ENCODE measurements at regions of chr2 and their contacts with region 1.

Region 1: DNA sequence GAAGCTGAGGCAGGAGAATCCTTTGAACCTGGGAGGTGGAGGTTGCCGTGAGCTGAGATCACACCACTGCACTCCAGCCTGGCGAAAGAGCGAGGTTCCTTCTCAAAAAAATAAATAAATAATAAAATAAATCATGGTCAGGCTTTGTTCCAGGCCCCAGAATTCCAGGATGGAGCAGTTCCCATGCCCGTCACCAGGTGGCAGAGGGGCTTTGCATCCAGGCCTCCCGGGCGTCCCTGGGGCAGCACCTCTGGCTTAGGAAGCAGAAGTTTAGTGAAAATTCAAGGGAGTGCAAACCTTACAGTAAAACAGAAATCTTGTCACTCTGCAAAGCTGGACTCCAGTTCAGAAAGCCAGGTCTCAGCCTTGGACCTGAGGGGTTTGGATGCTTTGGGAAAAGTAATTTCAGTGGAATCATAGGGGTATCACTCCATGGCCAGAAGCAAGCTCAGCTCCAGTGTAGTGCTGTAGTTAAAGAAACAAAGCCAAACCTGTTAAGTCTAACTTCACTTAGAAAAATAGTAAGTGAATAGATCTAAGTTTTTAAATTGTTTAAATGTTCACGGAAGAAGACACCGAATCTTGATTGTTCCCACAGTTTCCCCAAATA is 512.7 kb downstream of the CMPK2 start:
- DNase-seq: no peak
- H3K4me3 ChIP-seq: no peak overlapping the region
- H3K27ac ChIP-seq: no peak overlapping the region
- H3K4me1 ChIP-seq: no peaks in the 10 kb centered on the region
- H3K27me3 ChIP-seq: no peaks in the 10 kb centered on the region
- CTCF ChIP-seq: peak; percentile 31 to 53

Region 2: GRCh38 chr2:6337472-6337820 is 15.6 kb before region 1 on chr2:
- CTCF ChIA-PET with region 1: no interaction called
- dilution Hi-C with region 1: no loop called
- in situ Hi-C with region 1: no loop called
- intact Hi-C with region 1: no loop called
- DNase-seq: no peak
- H3K4me3 ChIP-seq: no peak overlapping the region
- H3K27ac ChIP-seq: no peak overlapping the region
- H3K4me1 ChIP-seq: no peaks in the 10 kb centered on the region
- H3K27me3 ChIP-seq: no peaks in the 10 kb centered on the region
- CTCF ChIP-seq: no peak

Region 3: GRCh38 chr2:6526093-6526824 is 173.2 kb after region 1 on chr2:
- CTCF ChIA-PET with region 1: no interaction called
- dilution Hi-C with region 1: no loop called
- in situ Hi-C with region 1: no loop called
- intact Hi-C with region 1: loop called (anchors 1 kb)
- DNase-seq: no peak
- H3K4me3 ChIP-seq: no peak overlapping the region
- H3K27ac ChIP-seq: no peak overlapping the region
- H3K4me1 ChIP-seq: no peaks in the 10 kb centered on the region
- H3K27me3 ChIP-seq: no peaks in the 10 kb centered on the region
- CTCF ChIP-seq: peak in 1 of 2 donors; percentile 26

Region 4: GRCh38 chr2:6657855-6658254 is 304.8 kb after region 1 on chr2:
- CTCF ChIA-PET with region 1: no interaction called
- dilution Hi-C with region 1: no loop called
- in situ Hi-C with region 1: no loop called
- intact Hi-C with region 1: no loop called
- DNase-seq: no peak
- H3K4me3 ChIP-seq: no peak overlapping the region
- H3K27ac ChIP-seq: no peak overlapping the region
- H3K4me1 ChIP-seq: no peaks in the 10 kb centered on the region
- H3K27me3 ChIP-seq: no peaks in the 10 kb centered on the region
- CTCF ChIP-seq: no peak

Region 5: GRCh38 chr2:6773007-6773693 is 420.1 kb after region 1 on chr2:
- CTCF ChIA-PET with region 1: no interaction called
- dilution Hi-C with region 1: no loop called
- in situ Hi-C with region 1: no loop called
- intact Hi-C with region 1: loop called (anchors 10 kb)
- DNase-seq: peak; percentile 6
- H3K4me3 ChIP-seq: no peak overlapping the region
- H3K27ac ChIP-seq: no peak overlapping the region
- H3K4me1 ChIP-seq: no peaks in the 10 kb centered on the region
- H3K27me3 ChIP-seq: no peaks in the 10 kb centered on the region
- CTCF ChIP-seq: peak; percentile 52 to 88

Region 6: DNA sequence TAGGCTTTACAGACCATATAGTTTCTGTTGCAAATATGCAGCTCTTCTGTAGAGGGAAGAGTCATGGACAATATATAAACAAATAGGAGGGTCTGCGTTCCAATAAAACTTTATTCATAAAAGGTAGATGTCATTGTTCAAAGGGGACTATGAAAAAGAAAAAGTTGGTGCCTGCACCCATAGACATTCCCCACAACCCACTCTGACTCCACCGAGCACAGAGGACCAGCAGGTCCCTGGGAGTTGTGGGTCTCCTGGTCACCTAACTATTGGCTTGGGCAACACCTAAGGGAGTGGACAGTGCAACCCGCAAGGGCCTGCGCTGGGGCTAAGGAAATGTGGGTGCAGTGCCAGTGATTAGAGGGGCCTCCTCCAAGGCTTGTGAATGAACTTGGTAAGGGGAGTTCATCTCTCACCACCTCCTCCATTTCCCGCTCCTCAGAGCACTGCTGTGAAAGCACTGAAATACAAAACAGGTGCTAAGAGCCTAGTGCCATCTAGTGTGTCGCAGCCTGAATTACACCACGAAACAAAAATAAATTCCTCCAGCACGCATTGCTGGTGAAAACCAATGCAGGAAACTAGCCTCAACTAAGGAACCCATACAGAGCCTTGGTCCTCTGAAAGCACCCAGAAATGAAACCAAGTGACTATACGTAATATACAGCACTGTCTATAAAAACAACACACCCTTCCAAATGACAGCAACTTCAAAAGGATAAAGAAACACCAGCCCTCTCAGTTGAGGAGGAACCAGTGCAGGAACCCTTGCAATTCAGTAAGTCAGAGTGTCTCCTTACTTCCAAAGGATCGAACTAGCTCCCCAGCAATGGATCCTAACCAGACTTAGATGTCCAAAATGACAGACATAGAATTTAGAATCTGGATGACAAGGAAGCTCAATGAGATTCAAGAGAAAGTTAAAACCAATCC is 730.8 kb after region 1 on chr2:
- CTCF ChIA-PET with region 1: no interaction called
- dilution Hi-C with region 1: no loop called
- in situ Hi-C with region 1: no loop called
- intact Hi-C with region 1: no loop called
- DNase-seq: peak; percentile 19
- H3K4me3 ChIP-seq: no peak overlapping the region
- H3K27ac ChIP-seq: no peak overlapping the region
- H3K4me1 ChIP-seq: no peaks in the 10 kb centered on the region
- H3K27me3 ChIP-seq: no peaks in the 10 kb centered on the region
- CTCF ChIP-seq: peak; percentile 70 to 79